Activated CD4-positive, alpha-beta T cell treated with anti-CD3 and anti-CD28 coated beads for 36 hours (primary cell): ENCODE measurements at regions of chr13 and their contacts with region 1.

Region 1: DNA sequence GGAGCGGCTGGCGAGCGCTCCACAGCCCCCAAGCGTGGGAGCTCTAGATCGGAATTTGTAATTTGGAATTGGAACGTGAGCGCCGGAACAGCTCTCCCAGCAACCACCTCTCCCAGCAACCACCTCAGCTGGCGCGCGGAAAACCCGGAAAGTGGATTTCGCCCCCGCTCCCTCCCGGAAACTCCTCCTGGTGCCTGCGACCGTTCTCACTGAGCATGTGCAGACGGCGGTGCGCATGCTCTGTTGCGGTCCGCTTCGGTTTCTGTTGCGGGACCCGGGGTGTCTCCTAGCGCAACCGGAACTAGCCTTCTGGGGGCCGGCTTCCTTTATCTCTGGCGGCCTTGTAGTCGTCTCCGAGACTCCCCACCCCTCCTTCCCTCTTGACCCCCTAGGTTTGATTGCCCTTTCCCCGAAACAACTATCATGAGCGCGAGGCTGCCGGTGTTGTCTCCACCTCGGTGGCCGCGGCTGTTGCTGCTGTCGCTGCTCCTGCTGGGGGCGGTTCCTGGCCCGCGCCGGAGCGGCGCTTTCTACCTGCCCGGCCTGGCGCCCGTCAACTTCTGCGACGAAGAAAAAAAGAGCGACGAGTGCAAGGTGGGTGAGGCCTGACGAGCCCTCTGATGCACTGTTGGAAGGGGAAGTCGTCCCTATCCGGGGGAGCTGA is at the start of gene TM9SF2:
- DNase-seq: peak; percentile 97
- ATAC-seq: peak; percentile 69
- H3K4me3 Mint-ChIP-seq: peak within 1 kb of the TSS; percentile 96
- H3K27ac Mint-ChIP-seq: peak within 1 kb of the TSS; percentile 97
- H3K4me1 Mint-ChIP-seq: peaks cover 68% of the 10 kb centered on the region
- H3K27me3 Mint-ChIP-seq: no peaks in the 10 kb centered on the region
- total RNA-seq, gene TM9SF2: 51.8 to 53.4 TPM

Region 2: GRCh38 chr13:97975848-97976609 is 1525.3 kb before region 1 on chr13:
- CTCF ChIA-PET with region 1: no interaction called
- POLR2A ChIA-PET with region 1: no interaction called
- intact Hi-C with region 1: loop called in 1 of 2 experiments (anchors 5 kb)
- DNase-seq: peak; percentile 94
- ATAC-seq: peak; percentile 92
- H3K4me3 Mint-ChIP-seq: peak overlapping the region; percentile 99
- H3K27ac Mint-ChIP-seq: peak overlapping the region; percentile 96
- H3K4me1 Mint-ChIP-seq: peaks cover 31% of the 10 kb centered on the region
- H3K27me3 Mint-ChIP-seq: no peaks in the 10 kb centered on the region

Region 3: DNA sequence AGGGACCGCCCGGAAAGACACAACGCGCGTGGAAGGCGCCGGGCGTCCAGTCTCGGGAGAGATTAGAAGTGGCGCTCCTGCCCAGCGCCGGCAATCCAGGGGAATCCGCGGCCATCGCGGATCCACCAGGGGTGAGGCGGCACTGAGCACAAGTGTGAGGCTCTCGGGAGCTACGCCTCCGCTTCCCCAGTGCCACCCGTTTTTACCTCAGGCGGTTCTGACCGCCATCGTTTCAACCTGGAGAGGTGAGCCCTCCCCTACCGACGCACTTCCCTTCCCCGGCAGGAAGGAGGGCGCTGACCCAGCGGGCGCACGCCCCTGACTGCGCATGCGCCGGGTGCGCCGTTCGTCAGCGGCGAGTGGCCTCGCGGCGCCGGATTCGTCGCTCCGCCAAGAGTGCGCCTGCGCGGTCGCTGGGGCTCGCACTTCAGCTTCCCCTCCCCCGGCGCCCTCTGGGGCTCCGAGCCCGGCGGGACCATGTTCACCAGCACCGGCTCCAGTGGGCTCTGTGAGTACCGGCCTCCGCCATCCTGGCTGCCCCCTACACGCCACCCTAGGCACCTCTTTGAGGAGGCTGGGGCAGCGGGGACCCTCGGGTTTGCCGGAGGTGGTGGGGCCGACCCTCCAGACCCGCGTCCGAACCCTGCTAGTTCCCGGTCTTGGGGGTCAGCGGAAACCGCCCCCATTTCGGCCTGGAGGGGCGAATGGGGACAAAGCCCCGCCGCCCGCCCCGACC is 300.7 kb before region 1 on chr13 and contains the start of gene UBAC2:
- CTCF ChIA-PET with region 1: no interaction called
- POLR2A ChIA-PET with region 1: interaction called, 3 read pairs
- intact Hi-C with region 1: loop called in 1 of 2 experiments (anchors 1 kb)
- DNase-seq: peak; percentile 98
- ATAC-seq: peak; percentile 77
- H3K4me3 Mint-ChIP-seq: peak within 1 kb of the TSS; percentile 82
- H3K27ac Mint-ChIP-seq: peak within 1 kb of the TSS; percentile 97
- H3K4me1 Mint-ChIP-seq: peaks cover 62% of the 10 kb centered on the region
- H3K27me3 Mint-ChIP-seq: no peaks in the 10 kb centered on the region
- total RNA-seq, gene UBAC2: 48.4 to 56.3 TPM

Region 4: GRCh38 chr13:99356158-99357091 is 144.9 kb before region 1 on chr13:
- CTCF ChIA-PET with region 1: no interaction called
- POLR2A ChIA-PET with region 1: interaction called, 3 read pairs
- intact Hi-C with region 1: loop called in 1 of 2 experiments (anchors 1 kb)
- DNase-seq: peak; percentile 48
- ATAC-seq: peak; percentile 25
- H3K4me3 Mint-ChIP-seq: peak overlapping the region; percentile 42
- H3K27ac Mint-ChIP-seq: peak overlapping the region; percentile 92
- H3K4me1 Mint-ChIP-seq: peaks cover 99% of the 10 kb centered on the region
- H3K27me3 Mint-ChIP-seq: no peaks in the 10 kb centered on the region

Region 5: DNA sequence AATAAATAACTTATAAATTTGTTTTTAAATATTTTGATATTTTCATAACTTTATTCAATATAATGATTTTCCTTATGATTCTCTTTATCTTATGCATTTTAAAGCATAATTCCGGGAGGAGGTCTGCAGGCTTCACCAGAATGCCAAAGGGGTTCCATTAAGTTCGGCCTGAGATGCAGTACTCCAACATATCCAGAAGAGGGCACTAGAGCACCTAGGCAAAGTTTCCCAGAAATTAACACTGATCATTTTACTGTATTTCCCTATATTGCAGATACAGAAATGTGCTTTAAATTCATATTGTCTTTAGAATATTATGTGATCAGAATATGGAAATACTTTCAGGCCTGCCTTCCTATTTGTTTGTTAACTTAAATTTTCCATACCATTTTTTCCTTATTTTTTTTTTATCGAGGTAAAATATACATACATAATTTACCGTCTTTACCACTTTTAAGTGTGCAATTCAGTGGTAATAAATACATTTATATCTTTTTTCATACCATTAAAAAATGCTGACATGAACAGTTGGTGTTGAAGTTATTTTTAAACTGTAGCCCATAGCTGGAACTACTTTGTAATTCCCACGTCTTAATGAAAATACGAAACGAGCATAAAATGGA is 58.9 kb before region 1 on chr13:
- CTCF ChIA-PET with region 1: interaction called, 32 read pairs
- POLR2A ChIA-PET with region 1: no interaction called
- intact Hi-C with region 1: loop called (anchors 1 kb)
- DNase-seq: peak; percentile 61
- ATAC-seq: peak; percentile 61
- H3K4me3 Mint-ChIP-seq: no peak overlapping the region
- H3K27ac Mint-ChIP-seq: no peak overlapping the region
- H3K4me1 Mint-ChIP-seq: peaks cover 9% of the 10 kb centered on the region
- H3K27me3 Mint-ChIP-seq: peaks cover 2% of the 10 kb centered on the region

Region 6: DNA sequence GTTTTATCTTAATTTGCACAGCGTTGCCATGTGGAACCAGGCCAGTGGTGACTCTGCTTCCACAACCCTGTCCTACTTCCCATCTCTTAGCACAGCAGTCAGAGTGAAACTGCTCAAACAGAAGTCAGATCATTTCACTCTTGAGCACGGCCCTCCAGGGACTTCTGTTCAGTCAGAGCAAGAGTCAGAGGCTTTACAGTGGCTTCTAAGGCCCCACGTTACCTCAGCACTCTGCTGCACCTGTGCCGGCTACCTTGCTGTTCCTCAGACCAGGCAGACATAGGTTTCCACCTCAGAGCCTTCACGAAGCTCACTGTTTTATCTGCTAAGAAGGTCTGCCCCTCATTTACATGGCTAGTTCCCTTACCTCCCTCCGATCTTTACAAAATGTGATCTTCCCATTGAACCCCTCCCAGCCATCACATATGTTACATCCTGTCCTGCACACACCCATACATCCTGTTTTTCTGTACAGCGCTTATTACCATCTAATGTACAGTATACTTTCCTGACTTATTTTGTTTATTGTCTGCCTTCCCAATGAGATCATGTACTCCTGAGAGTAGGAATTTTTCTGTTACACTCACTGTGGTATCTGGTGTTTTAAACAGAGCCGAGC is 41.6 kb after region 1 on chr13:
- CTCF ChIA-PET with region 1: interaction called, 8 read pairs
- POLR2A ChIA-PET with region 1: no interaction called
- intact Hi-C with region 1: loop called in 1 of 2 experiments (anchors 2 kb)
- DNase-seq: peak; percentile 72
- ATAC-seq: peak; percentile 98
- H3K4me3 Mint-ChIP-seq: peak overlapping the region; percentile 3
- H3K27ac Mint-ChIP-seq: peak overlapping the region; percentile 10
- H3K4me1 Mint-ChIP-seq: peaks cover 52% of the 10 kb centered on the region
- H3K27me3 Mint-ChIP-seq: no peaks in the 10 kb centered on the region

Region 7: DNA sequence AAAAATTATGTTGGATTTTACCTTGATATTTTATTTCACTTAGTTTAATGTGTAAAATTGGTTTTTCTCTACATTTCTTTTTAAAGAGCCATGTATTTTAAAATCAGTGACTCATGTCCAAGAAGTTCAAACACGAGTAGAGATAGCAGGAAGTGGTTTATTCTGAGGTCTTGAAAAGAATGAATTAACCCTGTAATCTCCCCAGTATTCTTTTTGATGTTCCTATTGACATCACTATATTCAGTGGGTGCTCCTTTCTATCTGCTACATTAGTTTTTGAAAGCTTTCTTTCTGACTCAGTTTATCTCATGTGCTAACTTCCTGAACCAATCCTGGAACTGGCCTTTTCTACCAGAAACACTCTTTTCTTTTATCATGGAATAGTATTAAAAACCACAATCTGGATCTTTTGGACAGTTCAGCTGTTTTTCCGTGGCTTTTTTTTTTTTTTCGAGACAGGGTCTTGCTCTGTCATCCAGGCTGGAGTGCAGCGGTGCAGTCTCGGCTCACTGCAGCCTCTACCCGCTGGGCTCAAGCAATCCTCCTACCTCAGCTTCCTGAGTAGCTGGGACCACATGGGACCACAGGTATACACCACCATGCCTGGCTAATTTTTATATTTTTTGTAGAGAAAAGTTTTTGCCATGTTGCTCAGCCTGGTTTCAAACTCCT is 702.5 kb after region 1 on chr13:
- CTCF ChIA-PET with region 1: no interaction called
- POLR2A ChIA-PET with region 1: no interaction called
- intact Hi-C with region 1: no loop called
- DNase-seq: peak; percentile 24
- ATAC-seq: peak; percentile 98
- H3K4me3 Mint-ChIP-seq: no peak overlapping the region
- H3K27ac Mint-ChIP-seq: peak overlapping the region; percentile 15
- H3K4me1 Mint-ChIP-seq: peaks cover 13% of the 10 kb centered on the region
- H3K27me3 Mint-ChIP-seq: no peaks in the 10 kb centered on the region

Region 8: DNA sequence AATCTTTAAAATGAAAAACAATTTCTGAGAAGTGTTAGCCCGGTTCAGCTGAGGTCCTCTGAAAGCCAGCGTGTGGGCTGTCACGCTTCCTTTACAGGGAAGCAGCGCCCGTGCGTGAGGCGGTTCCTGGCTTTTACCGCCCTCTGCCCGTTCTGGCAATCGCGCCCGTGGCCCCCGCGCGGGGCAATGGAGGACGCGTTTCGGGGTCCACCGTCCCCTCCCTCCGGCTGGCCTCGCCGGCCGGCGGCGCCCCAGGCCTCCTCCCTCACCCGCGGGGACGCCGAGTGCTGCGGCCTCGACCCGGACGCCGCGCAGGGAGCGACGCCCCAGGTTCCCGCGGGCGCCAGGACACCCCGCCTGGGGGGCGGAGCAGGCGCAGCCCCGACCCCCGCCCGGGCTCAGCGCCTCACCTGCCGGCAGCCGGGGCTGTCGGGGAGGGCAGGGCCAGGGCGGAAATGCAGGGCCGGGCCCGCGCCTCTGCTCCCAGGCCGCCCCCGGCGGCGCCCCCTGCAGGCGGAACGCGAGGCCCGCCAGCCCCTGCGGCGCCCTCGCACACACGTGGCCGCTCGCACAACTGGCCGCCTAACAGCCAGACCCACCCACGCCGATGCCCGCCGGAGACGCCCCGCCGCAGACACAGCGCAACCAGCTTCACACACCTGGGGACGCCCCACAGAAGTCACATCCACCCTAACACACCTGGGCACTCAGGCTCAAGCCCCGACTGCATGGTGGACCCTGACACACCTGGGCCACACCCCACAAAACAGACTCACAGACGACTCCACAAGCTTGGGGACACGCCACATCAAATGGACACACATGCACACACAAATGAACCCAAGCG is 1087.2 kb after region 1 on chr13 and contains the start of gene GGACT:
- CTCF ChIA-PET with region 1: no interaction called
- POLR2A ChIA-PET with region 1: no interaction called
- intact Hi-C with region 1: loop called in 1 of 2 experiments (anchors 2 kb)
- DNase-seq: peak; percentile 90
- ATAC-seq: peak; percentile 94
- H3K4me3 Mint-ChIP-seq: peak within 1 kb of the TSS; percentile 75
- H3K27ac Mint-ChIP-seq: peak within 1 kb of the TSS; percentile 86
- H3K4me1 Mint-ChIP-seq: peaks cover 37% of the 10 kb centered on the region
- H3K27me3 Mint-ChIP-seq: no peaks in the 10 kb centered on the region
- total RNA-seq, gene GGACT: 6.8 to 7.0 TPM